Activated naive CD4-positive, alpha-beta T cell treated with anti-CD3 and anti-CD28 coated beads for 36 hours (primary cell): ENCODE measurements at regions of chr15 and their contacts with region 1.

Region 1: GRCh38 chr15:60695713-60696522 is 217.0 kb upstream of the ICE2 start:
- DNase-seq: peak; percentile 94
- H3K4me3 Mint-ChIP-seq: peak overlapping the region; percentile 20
- H3K27ac Mint-ChIP-seq: peak overlapping the region; percentile 88
- H3K4me1 Mint-ChIP-seq: peaks cover 80% of the 10 kb centered on the region
- H3K27me3 Mint-ChIP-seq: no peaks in the 10 kb centered on the region

Region 2: GRCh38 chr15:60679256-60679655 is 16.7 kb before region 1 on chr15:
- CTCF ChIA-PET with region 1: interaction called, 3 read pairs
- intact Hi-C with region 1: loop called (anchors 2 kb)
- DNase-seq: no peak
- H3K4me3 Mint-ChIP-seq: no peak overlapping the region
- H3K27ac Mint-ChIP-seq: peak overlapping the region; percentile 1
- H3K4me1 Mint-ChIP-seq: peaks cover 30% of the 10 kb centered on the region
- H3K27me3 Mint-ChIP-seq: no peaks in the 10 kb centered on the region

Region 3: DNA sequence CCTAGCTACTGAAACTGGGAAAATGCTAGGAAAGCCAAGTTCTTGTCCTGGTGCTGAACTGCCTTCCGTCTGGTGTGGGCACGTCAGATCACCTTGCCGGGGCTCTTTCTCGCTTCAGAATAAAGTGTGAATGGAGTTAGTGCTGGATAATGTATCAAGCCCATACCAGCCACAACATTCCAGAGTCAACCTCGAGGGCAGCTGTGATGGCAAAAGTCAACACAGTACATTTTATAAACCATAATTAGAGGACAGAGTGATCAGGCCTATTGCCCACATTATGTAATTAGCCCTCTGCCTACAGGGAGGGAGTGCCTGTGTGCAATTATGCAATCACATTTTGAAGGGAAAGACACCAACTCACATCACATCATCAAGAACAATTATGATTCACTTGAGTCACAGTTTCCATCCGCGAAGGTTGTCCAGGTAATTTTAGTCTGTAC is 368.0 kb after region 1 on chr15:
- CTCF ChIA-PET with region 1: no interaction called
- intact Hi-C with region 1: no loop called
- DNase-seq: no peak
- H3K4me3 Mint-ChIP-seq: no peak overlapping the region
- H3K27ac Mint-ChIP-seq: no peak overlapping the region
- H3K4me1 Mint-ChIP-seq: no peaks in the 10 kb centered on the region
- H3K27me3 Mint-ChIP-seq: peaks cover 14% of the 10 kb centered on the region